Tibial artery (tissue), 4 donors: ENCODE measurements at regions of chr4 and their contacts with region 1.

Region 1: GRCh38 chr4:39243462-39243861 is 61.1 kb downstream of the WDR19 start:
- DNase-seq: no peak
- H3K4me3 ChIP-seq: no peak overlapping the region
- H3K27ac ChIP-seq: no peak overlapping the region
- H3K4me1 ChIP-seq: no peaks in the 10 kb centered on the region
- H3K27me3 ChIP-seq: no peaks in the 10 kb centered on the region
- CTCF ChIP-seq: no peak

Region 2: GRCh38 chr4:39205000-39205399 is 38.5 kb before region 1 on chr4:
- intact Hi-C with region 1: no loop called
- DNase-seq: no peak
- H3K4me3 ChIP-seq: no peak overlapping the region
- H3K27ac ChIP-seq: no peak overlapping the region
- H3K4me1 ChIP-seq: no peaks in the 10 kb centered on the region
- H3K27me3 ChIP-seq: no peaks in the 10 kb centered on the region
- CTCF ChIP-seq: no peak

Region 3: GRCh38 chr4:39227906-39228305 is 15.6 kb before region 1 on chr4:
- intact Hi-C with region 1: loop called (anchors 2 kb)
- DNase-seq: no peak
- H3K4me3 ChIP-seq: no peak overlapping the region
- H3K27ac ChIP-seq: peak overlapping the region in 1 of 2 donors; percentile 31
- H3K4me1 ChIP-seq: peaks cover 0 to 16% (median 0%) of the 10 kb centered on the region in 4 donors
- H3K27me3 ChIP-seq: no peaks in the 10 kb centered on the region
- CTCF ChIP-seq: no peak